B cell (primary cell): ENCODE measurements at regions of chr16 and their contacts with region 1.

Region 1: GRCh38 chr16:20383106-20384029 is 21.2 kb downstream of the PDILT start:
- DNase-seq: peak; percentile 54
- ATAC-seq: no peak
- H3K4me3 ChIP-seq: no peak overlapping the region
- H3K4me3 Mint-ChIP-seq: no peak overlapping the region
- H3K27ac ChIP-seq: no peak overlapping the region
- H3K27ac Mint-ChIP-seq: no peak overlapping the region
- H3K4me1 ChIP-seq: no peaks in the 10 kb centered on the region
- H3K4me1 Mint-ChIP-seq: peaks cover 2% of the 10 kb centered on the region
- H3K27me3 ChIP-seq: peaks cover 0 to 21% (median 1%) of the 10 kb centered on the region in 4 experiments
- H3K27me3 Mint-ChIP-seq: peaks cover 25% of the 10 kb centered on the region
- CTCF ChIP-seq: peak; percentile 79

Region 2: DNA sequence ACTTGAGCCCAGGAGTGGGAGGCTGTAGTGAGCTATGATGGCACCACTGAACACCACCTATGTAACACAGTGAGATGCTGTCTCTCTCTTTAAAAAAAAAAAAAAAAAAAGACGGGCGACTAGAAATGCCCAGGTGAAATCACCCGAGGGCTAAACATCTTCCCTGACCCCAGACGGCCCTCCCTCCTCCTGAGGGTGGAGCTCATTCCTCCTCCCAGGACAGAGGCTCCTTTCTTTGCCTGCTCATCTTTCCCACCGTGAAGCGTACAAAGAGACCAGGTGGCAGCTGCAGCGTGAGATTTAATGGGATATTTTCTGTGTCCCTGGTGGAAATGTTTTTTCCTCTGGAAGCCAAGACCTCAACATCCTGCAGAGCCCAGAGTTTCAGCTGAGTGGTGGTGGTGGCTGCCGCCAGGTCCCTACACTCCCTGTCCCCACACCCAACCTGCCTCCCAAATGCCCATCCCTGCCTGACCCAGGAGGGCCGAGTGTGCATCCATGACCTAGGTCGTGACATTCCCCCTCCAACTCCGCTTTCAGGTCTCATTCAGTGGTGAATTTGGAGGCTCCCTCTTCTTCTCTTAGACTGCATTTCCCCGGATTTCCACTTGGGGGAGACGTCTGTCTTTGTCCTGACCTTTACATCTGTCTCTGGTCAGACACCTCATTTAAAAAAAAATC is 484.3 kb before region 1 on chr16:
- CTCF ChIA-PET with region 1: interaction called, 3 read pairs
- POLR2A ChIA-PET with region 1: no interaction called
- intact Hi-C with region 1: loop called (anchors 2 kb)
- DNase-seq: peak; percentile 46
- ATAC-seq: peak; percentile 24
- H3K4me3 ChIP-seq: no peak overlapping the region
- H3K4me3 Mint-ChIP-seq: no peak overlapping the region
- H3K27ac ChIP-seq: no peak overlapping the region
- H3K27ac Mint-ChIP-seq: no peak overlapping the region
- H3K4me1 ChIP-seq: no peaks in the 10 kb centered on the region
- H3K4me1 Mint-ChIP-seq: no peaks in the 10 kb centered on the region
- H3K27me3 ChIP-seq: no peaks in the 10 kb centered on the region
- H3K27me3 Mint-ChIP-seq: peaks cover 9% of the 10 kb centered on the region
- CTCF ChIP-seq: peak; percentile 76

Region 3: GRCh38 chr16:19907161-19907992 is 476.0 kb before region 1 on chr16:
- CTCF ChIA-PET with region 1: interaction called, 26 read pairs
- POLR2A ChIA-PET with region 1: no interaction called
- intact Hi-C with region 1: no loop called
- DNase-seq: peak; percentile 59
- ATAC-seq: peak; percentile 78
- H3K4me3 ChIP-seq: no peak overlapping the region
- H3K4me3 Mint-ChIP-seq: no peak overlapping the region
- H3K27ac ChIP-seq: no peak overlapping the region
- H3K27ac Mint-ChIP-seq: no peak overlapping the region
- H3K4me1 ChIP-seq: peaks cover 0 to 5% of the 10 kb centered on the region in 2 donors
- H3K4me1 Mint-ChIP-seq: peaks cover 6% of the 10 kb centered on the region
- H3K27me3 ChIP-seq: peaks cover 0 to 10% (median 0%) of the 10 kb centered on the region in 4 experiments
- H3K27me3 Mint-ChIP-seq: peaks cover 27% of the 10 kb centered on the region
- CTCF ChIP-seq: peak; percentile 87

Region 4: GRCh38 chr16:20393801-20394577 is 10.6 kb after region 1 on chr16:
- CTCF ChIA-PET with region 1: interaction called, 30 read pairs
- POLR2A ChIA-PET with region 1: no interaction called
- intact Hi-C with region 1: no loop called
- DNase-seq: no peak
- ATAC-seq: no peak
- H3K4me3 ChIP-seq: no peak overlapping the region
- H3K4me3 Mint-ChIP-seq: no peak overlapping the region
- H3K27ac ChIP-seq: no peak overlapping the region
- H3K27ac Mint-ChIP-seq: no peak overlapping the region
- H3K4me1 ChIP-seq: no peaks in the 10 kb centered on the region
- H3K4me1 Mint-ChIP-seq: no peaks in the 10 kb centered on the region
- H3K27me3 ChIP-seq: no peaks in the 10 kb centered on the region
- H3K27me3 Mint-ChIP-seq: no peaks in the 10 kb centered on the region
- CTCF ChIP-seq: no peak